T-cell (primary cell): ENCODE measurements at regions of chr12 and their contacts with region 1.

Region 1: DNA sequence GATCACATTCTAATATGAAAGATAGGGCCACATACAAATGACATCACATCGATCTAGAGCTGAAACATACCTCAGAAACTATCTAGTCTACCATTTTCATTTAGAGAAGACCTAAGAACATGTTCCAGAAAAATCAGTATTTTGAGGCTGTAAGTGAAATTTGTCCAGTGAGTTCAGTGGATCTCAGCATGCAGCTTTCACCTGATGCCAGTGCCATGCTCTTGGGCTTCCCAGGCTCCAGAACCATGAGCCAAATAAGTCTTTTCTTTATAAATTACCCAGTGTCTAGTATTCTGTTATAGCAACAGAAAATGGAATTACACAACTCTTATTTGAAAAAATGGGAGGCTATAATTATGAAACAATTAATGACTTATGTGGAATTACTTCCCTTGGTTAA is 9.0 kb downstream of the CHPT1 start:
- DNase-seq: no peak
- ATAC-seq: no peak
- H3K4me3 ChIP-seq: no peak overlapping the region
- H3K4me3 Mint-ChIP-seq: no peak overlapping the region
- H3K27ac ChIP-seq: no peak overlapping the region
- H3K27ac Mint-ChIP-seq: no peak overlapping the region
- H3K4me1 ChIP-seq: no peaks in the 10 kb centered on the region
- H3K4me1 Mint-ChIP-seq: peaks cover 25 to 32% (median 31%) of the 10 kb centered on the region in 3 donors
- H3K27me3 ChIP-seq: no peaks in the 10 kb centered on the region
- H3K27me3 Mint-ChIP-seq: no peaks in the 10 kb centered on the region

Region 2: GRCh38 chr12:101876861-101877815 is 170.7 kb after region 1 on chr12 and contains the start of gene DRAM1:
- CTCF ChIA-PET with region 1: no interaction called
- POLR2A ChIA-PET with region 1: interaction called in 1 of 2 experiments, 10 read pairs
- DNase-seq: peak; percentile 40 to 80 (median 60)
- ATAC-seq: peak; percentile 80 to 86 (median 85)
- H3K4me3 ChIP-seq: peak within 1 kb of the TSS; percentile 80 to 92
- H3K4me3 Mint-ChIP-seq: peak within 1 kb of the TSS; percentile 84 to 94 (median 88)
- H3K27ac ChIP-seq: peak within 1 kb of the TSS; percentile 81
- H3K27ac Mint-ChIP-seq: peak within 1 kb of the TSS; percentile 73 to 74
- H3K4me1 ChIP-seq: peaks cover 0 to 15% of the 10 kb centered on the region in 2 experiments
- H3K4me1 Mint-ChIP-seq: peaks cover 11% of the 10 kb centered on the region in 3 donors
- H3K27me3 ChIP-seq: no peaks in the 10 kb centered on the region
- H3K27me3 Mint-ChIP-seq: no peaks in the 10 kb centered on the region
- total RNA-seq, gene DRAM1: 1.4 to 3.8 (median 1.9) TPM